Posterior vena cava (tissue), 2 donors: ENCODE measurements at regions of chr22 and their contacts with region 1.

Region 1: GRCh38 chr22:17988800-17989513 is 35.4 kb downstream of the MICAL3 start:
- DNase-seq: no peak

Region 2: DNA sequence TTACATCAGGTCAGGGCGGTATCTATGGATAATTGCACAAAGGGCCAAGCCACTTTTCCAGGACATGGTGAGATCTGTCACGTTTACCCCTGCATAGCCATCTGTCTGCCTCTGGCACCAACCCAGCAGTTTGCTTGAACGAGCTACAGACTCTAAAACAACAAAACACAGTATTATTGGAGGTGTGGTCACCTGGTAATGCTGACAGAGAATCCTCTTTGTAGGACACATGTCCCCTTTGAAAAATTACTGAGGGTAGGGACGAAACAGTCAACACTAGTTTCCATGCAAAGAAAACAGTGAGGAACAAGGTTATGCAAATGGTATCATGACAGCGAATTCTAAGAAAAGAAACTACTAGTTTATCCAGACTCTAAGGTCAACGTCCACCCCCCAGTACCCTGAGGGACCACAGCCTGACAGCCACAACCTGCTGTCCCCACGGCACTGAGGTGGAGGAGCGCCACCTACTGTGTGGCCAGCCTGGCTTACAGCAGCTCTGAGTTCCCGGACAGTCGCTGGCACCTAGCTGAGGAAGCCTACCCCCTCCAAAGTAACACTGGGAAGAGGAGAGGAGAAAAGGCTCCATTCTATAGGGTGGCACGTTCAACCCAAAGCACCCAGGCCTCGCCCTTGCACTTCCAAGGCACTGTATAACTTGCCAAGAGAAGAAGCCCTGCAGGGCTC is 97.3 kb before region 1 on chr22:
- intact Hi-C with region 1: loop called in 1 of 2 experiments (anchors 2 kb)
- DNase-seq: no peak

Region 3: DNA sequence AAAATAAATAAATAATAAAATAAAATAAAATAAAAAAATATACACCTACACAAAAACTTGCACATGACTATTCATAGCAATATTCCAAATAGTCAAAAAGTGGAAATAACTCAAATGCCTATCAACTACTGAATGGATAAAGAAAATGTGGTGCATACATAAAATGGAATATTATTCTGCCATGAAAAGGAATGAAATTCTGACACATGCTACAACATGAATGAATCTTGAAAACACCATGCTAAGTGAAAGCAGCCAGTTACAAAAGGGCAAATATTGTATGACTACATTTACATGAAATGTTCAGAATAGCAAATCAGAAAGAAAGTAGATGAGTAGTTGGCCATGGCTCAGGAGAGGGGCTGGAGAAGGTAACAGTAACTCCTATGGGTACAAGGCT is 10.9 kb before region 1 on chr22:
- intact Hi-C with region 1: loop called in 1 of 2 experiments (anchors 1 kb)
- DNase-seq: no peak